Activated CD4-positive, alpha-beta T cell treated with anti-CD3 and anti-CD28 coated beads, Interleukin-2, amount 10 ng/mL, durations not matched to agents 24 days and 14 days (primary cell): ENCODE measurements at regions of chr5 and their contacts with region 1.

Region 1: GRCh38 chr5:102778478-102778877 is 23.4 kb downstream of the PAM start:
- DNase-seq: no peak
- H3K4me3 Mint-ChIP-seq: peak overlapping the region; percentile 47
- H3K27ac Mint-ChIP-seq: peak overlapping the region; percentile 89
- H3K4me1 Mint-ChIP-seq: peaks cover 54% of the 10 kb centered on the region
- H3K27me3 Mint-ChIP-seq: no peaks in the 10 kb centered on the region

Region 2: GRCh38 chr5:102681407-102681983 is 97.0 kb before region 1 on chr5:
- intact Hi-C with region 1: loop called (anchors 2 kb)
- DNase-seq: peak; percentile 87
- H3K4me3 Mint-ChIP-seq: no peak overlapping the region
- H3K27ac Mint-ChIP-seq: no peak overlapping the region
- H3K4me1 Mint-ChIP-seq: no peaks in the 10 kb centered on the region
- H3K27me3 Mint-ChIP-seq: peaks cover 17% of the 10 kb centered on the region

Region 3: DNA sequence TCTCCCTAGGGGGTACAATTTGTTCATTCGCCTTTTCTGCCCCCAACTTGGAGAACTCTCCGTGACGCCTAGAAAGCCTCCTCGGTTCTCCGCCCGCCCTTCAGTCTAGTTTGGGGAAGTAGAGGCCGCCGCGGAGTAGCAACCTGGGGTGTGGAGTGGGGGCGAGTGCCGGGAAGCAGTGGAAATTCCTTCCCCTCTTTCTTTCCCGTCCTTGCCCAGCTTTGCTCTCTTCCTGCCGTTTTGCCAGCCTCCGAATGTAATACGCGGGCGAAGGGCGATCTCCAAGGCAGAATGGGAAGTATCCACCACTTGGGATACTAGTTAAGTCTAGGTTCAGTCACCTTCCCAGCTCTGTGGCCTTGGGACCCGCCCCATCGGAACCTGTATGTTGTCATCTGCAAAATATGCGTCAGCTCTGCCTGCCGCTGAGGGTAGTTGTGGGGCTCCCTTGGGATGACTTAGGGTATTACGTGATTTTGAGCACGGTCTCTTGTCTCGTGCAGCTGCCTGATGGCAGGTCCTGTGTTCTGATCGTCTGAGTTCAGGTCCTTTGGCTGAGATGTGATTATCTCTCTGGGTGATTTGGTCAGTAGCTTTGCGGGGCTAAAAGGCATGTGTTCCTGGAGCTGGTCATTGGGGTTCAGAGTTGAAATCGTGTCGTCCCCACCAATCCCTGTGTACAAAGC is 22.6 kb before region 1 on chr5:
- intact Hi-C with region 1: loop called (anchors 1 kb)
- DNase-seq: peak; percentile 88
- H3K4me3 Mint-ChIP-seq: peak overlapping the region; percentile 95
- H3K27ac Mint-ChIP-seq: peak overlapping the region; percentile 97
- H3K4me1 Mint-ChIP-seq: peaks cover 43% of the 10 kb centered on the region
- H3K27me3 Mint-ChIP-seq: peaks cover 2% of the 10 kb centered on the region

Region 4: GRCh38 chr5:102767862-102768261 is 10.6 kb before region 1 on chr5:
- intact Hi-C with region 1: loop called (anchors 1 kb)
- DNase-seq: no peak
- H3K4me3 Mint-ChIP-seq: no peak overlapping the region
- H3K27ac Mint-ChIP-seq: peak overlapping the region; percentile 76
- H3K4me1 Mint-ChIP-seq: peaks cover 54% of the 10 kb centered on the region
- H3K27me3 Mint-ChIP-seq: no peaks in the 10 kb centered on the region

Region 5: DNA sequence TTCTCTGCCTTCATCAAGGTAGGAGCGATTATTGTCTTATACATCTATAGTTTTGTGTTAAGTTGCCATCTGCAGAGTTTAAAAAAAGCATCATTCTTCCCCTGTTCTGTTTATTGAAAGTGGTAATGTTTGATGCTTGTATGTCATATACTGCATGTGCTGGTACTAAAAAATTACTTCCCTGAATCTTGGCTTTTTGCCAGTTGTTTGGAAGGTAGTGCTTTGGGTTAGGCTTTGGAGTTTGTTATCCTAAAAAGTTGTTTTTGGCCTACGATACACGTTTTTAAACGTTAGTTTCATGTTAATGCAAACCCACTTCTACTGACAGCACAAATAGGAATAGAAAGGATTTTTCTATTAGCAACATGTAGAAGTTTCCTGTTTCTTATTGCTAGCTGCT is 183.2 kb after region 1 on chr5:
- intact Hi-C with region 1: loop called (anchors 10 kb)
- DNase-seq: no peak
- H3K4me3 Mint-ChIP-seq: no peak overlapping the region
- H3K27ac Mint-ChIP-seq: no peak overlapping the region
- H3K4me1 Mint-ChIP-seq: peaks cover 5% of the 10 kb centered on the region
- H3K27me3 Mint-ChIP-seq: no peaks in the 10 kb centered on the region

Region 6: GRCh38 chr5:103119765-103120606 is 341.5 kb after region 1 on chr5 and contains the starts of genes GIN1 and PPIP5K2:
- intact Hi-C with region 1: loop called (anchors 1 kb)
- DNase-seq: peak; percentile 99
- H3K4me3 Mint-ChIP-seq: peak within 1 kb of the TSS; percentile 88
- H3K27ac Mint-ChIP-seq: peak within 1 kb of the TSS; percentile 97
- H3K4me1 Mint-ChIP-seq: peaks cover 34% of the 10 kb centered on the region
- H3K27me3 Mint-ChIP-seq: no peaks in the 10 kb centered on the region
- total RNA-seq, gene GIN1: 7.5 and 12.1 TPM in 2 replicates
- total RNA-seq, gene PPIP5K2: 46.2 and 46.3 TPM in 2 replicates

Region 7: GRCh38 chr5:103211576-103212561 is 433.4 kb after region 1 on chr5:
- intact Hi-C with region 1: loop called (anchors 2 kb)
- DNase-seq: peak; percentile 60
- H3K4me3 Mint-ChIP-seq: peak overlapping the region; percentile 53
- H3K27ac Mint-ChIP-seq: peak overlapping the region; percentile 54
- H3K4me1 Mint-ChIP-seq: peaks cover 30% of the 10 kb centered on the region
- H3K27me3 Mint-ChIP-seq: no peaks in the 10 kb centered on the region